Calu3 (cell line): ENCODE measurements at regions of chr2 and their contacts with region 1.

Region 1: GRCh38 chr2:142629193-142629592 is 248.3 kb upstream of the KYNU start:
- DNase-seq: no peak
- H3K4me3 Mint-ChIP-seq: no peak overlapping the region
- H3K27ac Mint-ChIP-seq: no peak overlapping the region
- H3K4me1 Mint-ChIP-seq: no peaks in the 10 kb centered on the region
- H3K27me3 Mint-ChIP-seq: no peaks in the 10 kb centered on the region
- CTCF ChIP-seq: no peak

Region 2: DNA sequence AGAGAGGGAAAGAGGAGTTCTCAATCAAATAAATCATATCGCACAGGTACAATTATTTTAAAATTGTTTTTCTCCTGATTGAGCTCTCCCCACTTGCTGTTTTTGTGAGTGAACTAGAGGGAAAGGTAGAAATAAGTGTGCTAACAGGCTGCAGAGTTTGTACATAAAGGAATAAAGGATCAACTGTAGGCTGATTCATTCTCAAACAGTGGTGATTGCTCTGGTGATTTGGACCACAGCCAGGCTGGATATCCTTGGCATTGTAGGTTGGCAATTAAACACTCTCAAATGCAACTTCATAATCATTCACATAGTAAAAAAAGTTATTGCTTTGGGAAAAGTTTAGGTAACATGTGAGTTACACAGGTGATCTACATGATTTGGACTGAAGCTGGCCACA is 528.2 kb before region 1 on chr2:
- CTCF ChIA-PET with region 1: no interaction called
- intact Hi-C with region 1: no loop called
- DNase-seq: peak; percentile 37
- H3K4me3 Mint-ChIP-seq: no peak overlapping the region
- H3K27ac Mint-ChIP-seq: no peak overlapping the region
- H3K4me1 Mint-ChIP-seq: peaks cover 17% of the 10 kb centered on the region
- H3K27me3 Mint-ChIP-seq: no peaks in the 10 kb centered on the region
- CTCF ChIP-seq: no peak

Region 3: DNA sequence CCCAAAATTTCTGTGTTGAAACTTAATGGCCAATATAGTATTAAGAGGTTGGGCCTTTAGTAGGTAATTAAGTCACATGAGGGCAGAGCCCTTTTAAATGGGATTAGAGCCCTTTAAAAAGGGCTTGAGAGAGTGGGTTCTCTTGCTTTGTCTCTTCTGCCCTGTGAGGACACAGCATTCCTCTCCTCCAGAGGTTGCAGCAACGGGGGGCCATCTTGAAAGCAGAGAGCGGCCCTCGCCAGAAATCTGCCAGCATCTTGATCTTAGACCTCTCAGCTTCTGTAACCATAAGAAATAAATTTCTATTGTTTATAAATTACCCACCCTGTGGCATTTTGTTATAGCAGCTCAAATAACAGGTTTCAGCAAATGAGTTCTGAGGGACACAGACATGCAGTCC is 193.3 kb before region 1 on chr2:
- CTCF ChIA-PET with region 1: no interaction called
- intact Hi-C with region 1: loop called (anchors 1 kb)
- DNase-seq: no peak
- H3K4me3 Mint-ChIP-seq: no peak overlapping the region
- H3K27ac Mint-ChIP-seq: no peak overlapping the region
- H3K4me1 Mint-ChIP-seq: no peaks in the 10 kb centered on the region
- H3K27me3 Mint-ChIP-seq: no peaks in the 10 kb centered on the region
- CTCF ChIP-seq: no peak